Cardiac septum (tissue), 1 donor: ENCODE measurements at regions of chr13 and their contacts with region 1.

Region 1: GRCh38 chr13:37295071-37295470 is 189.6 kb upstream of the CSNK1A1L start:
- DNase-seq: peak; percentile 84

Region 2: GRCh38 chr13:37127691-37128241 is 167.3 kb before region 1 on chr13:
- intact Hi-C with region 1: loop called (anchors 5 kb)
- DNase-seq: no peak

Region 3: DNA sequence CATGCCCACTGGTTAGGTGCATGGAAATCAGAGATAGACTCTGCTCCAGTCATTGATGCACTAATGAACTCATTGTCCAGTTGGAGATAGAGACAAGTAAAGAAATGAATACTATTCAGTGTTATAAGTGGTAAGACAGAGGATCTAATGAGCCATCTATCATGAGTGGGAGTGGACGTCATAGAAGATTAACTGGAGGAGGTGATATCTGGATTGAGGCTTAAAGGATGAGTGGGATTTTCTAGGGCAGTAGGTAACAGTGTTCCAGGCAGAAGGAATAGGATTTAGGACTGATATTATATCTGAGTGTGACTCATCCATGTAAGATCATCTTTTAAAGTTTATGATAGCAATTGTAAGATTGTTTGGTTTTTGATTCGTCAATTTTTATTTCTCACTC is 37.4 kb before region 1 on chr13:
- intact Hi-C with region 1: no loop called
- DNase-seq: no peak

Region 4: GRCh38 chr13:37360556-37360955 is 65.5 kb after region 1 on chr13:
- intact Hi-C with region 1: no loop called
- DNase-seq: no peak

Region 5: DNA sequence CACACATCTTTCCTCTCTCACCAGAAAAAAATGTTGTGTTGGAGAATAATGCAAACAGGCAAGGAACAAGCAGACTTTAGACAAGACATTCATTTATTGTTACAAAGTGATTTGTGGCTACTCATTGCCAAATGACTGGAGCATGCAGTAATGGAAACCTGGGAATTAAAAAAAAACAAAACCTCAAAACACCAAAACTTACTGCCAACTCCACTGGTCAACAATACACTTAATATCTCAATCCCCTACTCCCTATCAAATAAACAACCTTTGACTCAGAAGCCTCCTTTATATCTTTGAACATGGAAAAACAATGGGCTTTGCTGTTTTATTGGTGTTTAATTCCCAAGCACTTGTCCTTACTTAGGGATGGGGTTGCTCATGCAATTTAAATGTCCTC is 190.7 kb after region 1 on chr13:
- intact Hi-C with region 1: loop called (anchors 5 kb)
- DNase-seq: no peak

Region 6: DNA sequence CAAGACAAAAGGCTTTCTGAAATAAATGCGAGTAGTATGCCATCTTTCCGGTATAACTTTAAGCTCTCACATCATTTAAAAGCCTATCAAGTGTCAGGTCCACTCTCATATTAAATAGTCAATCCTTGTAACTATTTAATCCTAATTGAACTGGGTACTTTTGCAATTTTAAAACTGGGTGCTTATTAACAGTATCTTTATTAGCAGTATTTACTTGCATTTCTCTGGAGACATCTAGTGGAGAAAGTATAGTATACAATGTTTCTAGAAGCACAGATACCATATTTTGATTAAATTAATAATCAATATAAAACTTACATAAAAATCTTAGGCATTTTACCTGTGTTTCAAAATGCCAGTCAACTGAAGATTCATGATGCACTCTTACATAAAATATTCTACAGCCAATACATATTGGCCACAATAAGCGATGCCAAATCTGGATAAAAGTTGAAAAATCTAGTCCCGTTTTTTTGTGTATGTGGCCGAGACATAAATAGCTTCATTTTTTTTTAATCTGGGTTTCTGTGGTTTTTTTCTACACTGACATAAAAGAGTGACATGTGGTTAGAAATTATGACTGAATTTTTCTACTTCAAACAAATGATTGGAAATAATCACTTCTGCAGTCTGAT is 307.8 kb after region 1 on chr13:
- intact Hi-C with region 1: loop called (anchors 10 kb)
- DNase-seq: no peak